Aorta (tissue), 5 donors: ENCODE measurements at regions of chr4 and their contacts with region 1.

Region 1: GRCh38 chr4:52659001-52659721 is at the start of gene USP46:
- DNase-seq: peak; percentile 84 to 94
- ATAC-seq: peak; percentile 94
- H3K4me3 ChIP-seq: peak within 1 kb of the TSS; percentile 92 to 94
- H3K27ac ChIP-seq: peak within 1 kb of the TSS; percentile 79 to 88
- H3K4me1 ChIP-seq: peaks cover 0 to 1% of the 10 kb centered on the region in 2 donors
- H3K27me3 ChIP-seq: no peaks in the 10 kb centered on the region
- total RNA-seq, gene USP46: 23.7 to 24.1 TPM

Region 2: DNA sequence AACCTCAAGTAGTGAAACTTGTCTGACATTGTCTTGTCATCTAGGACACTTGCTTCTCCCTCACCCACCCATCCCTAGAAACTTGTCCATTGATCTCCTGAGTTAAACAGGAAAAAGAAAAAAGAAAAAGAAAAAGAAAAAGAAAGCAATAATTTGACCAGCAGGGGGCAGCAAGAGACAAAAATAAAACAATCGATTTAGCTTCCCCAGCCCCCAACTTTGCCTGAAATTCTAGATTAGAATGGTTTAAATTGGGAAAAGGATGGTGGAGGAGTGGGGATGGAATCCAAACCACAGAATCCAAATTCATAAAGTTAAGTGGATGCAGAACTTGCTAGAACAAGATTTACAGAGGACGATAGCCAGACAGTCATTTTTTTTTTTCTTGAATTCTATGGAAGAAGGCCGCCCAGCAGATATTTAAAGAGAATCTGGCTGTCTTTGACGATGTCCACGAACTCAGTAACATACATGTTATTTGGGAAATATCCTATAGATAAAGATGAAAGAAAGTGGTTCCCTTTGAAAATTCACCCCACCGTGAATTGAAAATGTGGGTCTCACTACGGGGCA is 282.9 kb before region 1 on chr4:
- intact Hi-C with region 1: loop called in 1 of 2 experiments (anchors 10 kb)
- DNase-seq: no peak
- ATAC-seq: no peak
- H3K4me3 ChIP-seq: no peak overlapping the region
- H3K27ac ChIP-seq: no peak overlapping the region
- H3K4me1 ChIP-seq: no peaks in the 10 kb centered on the region
- H3K27me3 ChIP-seq: no peaks in the 10 kb centered on the region

Region 3: GRCh38 chr4:52588097-52588782 is 70.9 kb before region 1 on chr4:
- intact Hi-C with region 1: loop called in 1 of 2 experiments (anchors 5 kb)
- DNase-seq: peak in 1 of 2 donors; percentile 54
- ATAC-seq: peak; percentile 49
- H3K4me3 ChIP-seq: no peak overlapping the region
- H3K27ac ChIP-seq: peak overlapping the region; percentile 44 to 47
- H3K4me1 ChIP-seq: peaks cover 8 to 13% of the 10 kb centered on the region in 2 donors
- H3K27me3 ChIP-seq: no peaks in the 10 kb centered on the region

Region 4: DNA sequence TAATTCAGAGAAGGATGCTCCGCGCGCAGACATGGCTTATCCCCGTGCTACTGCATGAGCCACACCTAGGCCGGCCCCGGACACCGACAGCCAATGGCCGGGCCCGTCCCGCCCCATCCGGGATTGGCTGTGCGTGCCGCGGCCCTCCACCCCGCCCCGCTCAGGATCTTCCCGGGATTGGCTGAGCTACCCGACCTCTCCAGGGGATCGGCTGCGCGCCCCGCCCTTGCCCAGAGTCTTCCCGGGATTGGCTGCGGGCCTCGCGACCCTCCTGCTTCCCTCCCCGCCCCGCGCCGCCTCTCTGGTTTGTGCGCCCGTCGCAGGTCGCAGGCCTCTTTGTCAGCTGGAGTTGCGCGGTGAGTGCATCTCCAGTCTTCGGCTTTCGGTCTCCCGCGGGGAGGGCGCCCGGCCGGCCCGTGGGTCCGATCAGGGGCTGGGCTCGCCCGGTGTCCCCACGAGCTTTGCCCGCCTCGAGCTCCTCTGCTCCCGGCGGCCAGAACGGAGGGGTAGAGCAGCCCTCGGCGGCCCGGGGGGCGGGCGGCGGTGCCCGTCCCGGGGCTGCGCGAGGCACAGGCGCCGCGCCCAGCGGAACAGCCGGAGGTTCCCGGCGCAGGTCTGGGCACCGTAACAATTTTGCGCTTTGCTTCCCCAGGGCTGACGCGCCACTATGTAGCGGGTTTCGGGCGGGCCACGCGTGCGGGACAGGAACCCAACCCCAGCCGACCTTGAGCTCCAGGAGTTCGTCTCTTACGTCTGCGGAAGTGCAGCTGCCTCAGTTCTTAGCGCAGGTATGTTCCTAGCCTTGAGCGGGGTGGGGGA is 53.2 kb after region 1 on chr4:
- intact Hi-C with region 1: loop called (anchors 5 kb)
- DNase-seq: peak; percentile 99
- ATAC-seq: peak; percentile 99
- H3K4me3 ChIP-seq: peak overlapping the region; percentile 78 to 82
- H3K27ac ChIP-seq: peak overlapping the region; percentile 88 to 89
- H3K4me1 ChIP-seq: peaks cover 0 to 3% of the 10 kb centered on the region in 2 donors
- H3K27me3 ChIP-seq: no peaks in the 10 kb centered on the region

Region 5: GRCh38 chr4:52861879-52862616 is 202.9 kb after region 1 on chr4 and contains the start of gene RASL11B:
- intact Hi-C with region 1: loop called (anchors 5 kb)
- DNase-seq: peak; percentile 89 to 94
- ATAC-seq: peak; percentile 97
- H3K4me3 ChIP-seq: peak within 1 kb of the TSS; percentile 71 to 75
- H3K27ac ChIP-seq: peak within 1 kb of the TSS; percentile 11 to 78
- H3K4me1 ChIP-seq: peaks cover 0 to 2% of the 10 kb centered on the region in 2 donors
- H3K27me3 ChIP-seq: no peaks in the 10 kb centered on the region
- total RNA-seq, gene RASL11B: 5.6 to 5.7 TPM

Region 6: DNA sequence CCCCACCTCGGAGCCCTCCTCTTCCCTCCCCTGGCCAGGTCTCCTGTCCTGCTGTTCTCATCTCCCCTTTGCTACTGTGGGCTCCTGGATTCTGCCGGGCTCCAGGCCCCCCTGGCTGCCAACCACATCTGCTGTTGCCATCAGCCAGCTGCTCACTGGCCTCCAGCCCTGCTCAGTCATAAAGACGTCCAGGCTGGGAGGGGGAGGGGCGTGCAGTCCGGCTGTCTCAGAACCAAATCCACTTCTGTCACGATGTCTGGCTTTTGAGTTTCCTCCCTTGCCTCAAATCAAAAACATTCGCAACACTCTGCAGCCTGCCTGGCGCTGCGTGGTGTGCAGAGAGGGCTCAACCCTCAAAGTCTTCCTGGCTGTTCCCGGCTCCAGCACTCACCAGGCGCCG is 210.0 kb after region 1 on chr4:
- intact Hi-C with region 1: loop called (anchors 5 kb)
- DNase-seq: peak; percentile 86 to 87
- ATAC-seq: peak; percentile 72
- H3K4me3 ChIP-seq: no peak overlapping the region
- H3K27ac ChIP-seq: peak overlapping the region; percentile 18 to 46
- H3K4me1 ChIP-seq: peaks cover 0 to 12% of the 10 kb centered on the region in 2 donors
- H3K27me3 ChIP-seq: no peaks in the 10 kb centered on the region

Region 7: DNA sequence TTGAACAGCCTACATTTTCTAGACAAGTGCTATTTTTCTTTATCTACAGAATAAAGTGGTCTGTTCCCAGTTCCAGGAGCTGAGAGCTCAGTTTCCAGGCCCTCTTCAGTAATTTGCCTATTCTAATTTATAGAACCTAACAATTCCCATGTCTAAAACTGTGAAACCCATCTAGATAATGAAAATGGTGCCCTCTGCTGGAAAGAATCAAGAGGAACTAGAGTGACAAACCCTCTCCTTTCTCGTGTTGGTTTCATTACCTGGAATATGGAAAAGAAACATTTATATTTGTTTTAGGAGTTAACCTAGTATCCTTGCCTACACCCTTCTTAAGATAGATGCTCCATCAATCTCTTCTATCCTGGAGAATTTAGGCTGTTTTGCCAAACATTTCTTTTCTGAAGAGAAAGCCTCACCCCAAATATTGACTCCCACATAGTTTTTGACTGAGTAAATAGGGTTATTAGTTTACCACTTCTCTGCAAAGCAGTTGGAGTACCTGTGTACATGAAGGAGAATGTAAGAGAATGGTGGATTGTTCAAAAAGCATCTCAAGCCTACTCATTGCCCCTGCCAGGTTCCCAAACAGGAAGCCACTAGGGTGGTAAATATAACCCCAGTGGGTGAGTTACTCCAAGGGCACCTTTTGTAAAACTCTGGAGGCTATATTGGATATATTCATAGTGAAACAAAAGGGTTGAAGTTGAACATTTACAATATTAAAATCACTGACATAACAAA is 324.6 kb after region 1 on chr4:
- intact Hi-C with region 1: loop called in 1 of 2 experiments (anchors 10 kb)
- DNase-seq: no peak
- ATAC-seq: peak; percentile 80
- H3K4me3 ChIP-seq: no peak overlapping the region
- H3K27ac ChIP-seq: no peak overlapping the region
- H3K4me1 ChIP-seq: no peaks in the 10 kb centered on the region
- H3K27me3 ChIP-seq: no peaks in the 10 kb centered on the region